Activated CD8-positive, alpha-beta T cell treated with anti-CD3 and anti-CD28 coated beads, Interleukin-2, amount 10 ng/mL, durations not matched to agents 7 days and 5 days (primary cell): ENCODE measurements at regions of chr15 and their contacts with region 1.

Region 1: DNA sequence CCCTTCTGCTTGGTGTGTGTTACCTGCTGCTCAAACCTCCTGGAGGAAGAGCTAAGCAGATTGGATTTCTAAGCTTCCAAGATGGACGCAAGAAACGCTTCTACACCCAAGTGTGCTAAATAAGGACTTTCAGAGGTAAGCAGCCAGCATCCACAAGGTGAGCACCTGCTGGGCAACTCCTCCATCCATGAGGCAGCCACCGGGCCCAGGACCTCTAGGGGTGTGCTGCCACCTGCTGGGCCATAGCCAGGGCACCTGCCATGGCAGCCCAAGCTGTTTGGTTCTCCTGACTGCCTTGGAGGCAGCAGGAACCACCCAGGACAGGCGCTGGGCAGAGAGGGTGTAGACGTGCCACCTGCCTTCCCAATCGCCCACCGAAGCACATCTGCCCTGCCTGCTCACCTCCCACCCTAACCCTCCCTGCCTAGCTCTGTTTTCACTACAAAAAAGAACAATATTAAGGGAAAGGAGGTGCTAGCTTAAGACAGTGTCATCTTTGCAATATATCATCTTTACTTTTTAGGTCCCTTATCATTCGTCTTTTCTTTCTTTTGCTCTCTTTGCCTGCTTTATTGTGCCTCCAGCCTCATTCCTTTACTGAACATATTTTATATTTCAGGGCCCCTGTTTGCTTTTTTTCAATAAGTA is 12.9 kb downstream of the C15orf62 start:
- DNase-seq: peak; percentile 85
- ATAC-seq: peak; percentile 98
- H3K4me3 Mint-ChIP-seq: no peak overlapping the region
- H3K27ac Mint-ChIP-seq: no peak overlapping the region
- H3K4me1 Mint-ChIP-seq: peaks cover 24% of the 10 kb centered on the region
- H3K27me3 Mint-ChIP-seq: no peaks in the 10 kb centered on the region

Region 2: DNA sequence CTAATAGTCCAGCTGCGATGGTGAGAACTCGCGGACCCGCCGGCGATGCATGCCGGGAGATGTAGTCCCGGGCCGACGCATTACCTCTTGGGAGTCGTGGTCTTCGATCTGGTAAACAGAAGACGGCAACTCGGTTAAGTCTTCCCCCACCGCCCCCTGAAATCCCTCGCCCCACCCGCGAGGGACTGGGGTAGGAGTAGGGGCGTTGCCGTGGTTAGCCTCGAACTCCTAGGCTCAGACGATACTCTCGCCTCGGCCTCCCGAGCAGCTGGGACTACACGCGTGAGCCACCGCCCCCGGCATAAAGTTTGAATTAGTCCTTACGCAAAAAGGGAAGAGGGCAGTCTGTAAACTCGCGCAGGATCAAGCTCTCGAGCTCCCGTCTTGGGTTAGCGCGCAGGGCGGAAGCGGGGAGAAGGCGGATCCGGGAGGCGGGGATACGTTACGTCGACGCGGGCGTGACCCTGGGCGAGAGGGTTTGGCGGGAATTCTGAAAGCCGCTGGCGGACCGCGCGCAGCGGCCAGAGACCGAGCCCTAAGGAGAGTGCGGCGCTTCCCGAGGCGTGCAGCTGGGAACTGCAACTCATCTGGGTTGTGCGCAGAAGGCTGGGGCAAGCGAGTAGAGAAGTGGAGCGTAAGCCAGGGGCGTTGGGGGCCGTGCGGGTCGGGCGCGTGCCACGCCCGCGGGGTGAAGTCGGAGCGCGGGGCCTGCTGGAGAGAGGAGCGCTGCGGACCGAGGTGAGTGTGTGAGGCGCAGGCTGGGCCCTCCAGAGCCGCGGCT is 87.8 kb before region 1 on chr15 and contains the start of gene RAD51:
- CTCF ChIA-PET with region 1: interaction called, 20 read pairs
- POLR2A ChIA-PET with region 1: interaction called, 8 read pairs
- DNase-seq: peak; percentile 96
- ATAC-seq: peak; percentile 94
- H3K4me3 Mint-ChIP-seq: peak within 1 kb of the TSS; percentile 100
- H3K27ac Mint-ChIP-seq: peak within 1 kb of the TSS; percentile 100
- H3K4me1 Mint-ChIP-seq: peaks cover 42% of the 10 kb centered on the region
- H3K27me3 Mint-ChIP-seq: no peaks in the 10 kb centered on the region
- total RNA-seq, gene RAD51: 82.7 to 87.3 TPM

Region 3: DNA sequence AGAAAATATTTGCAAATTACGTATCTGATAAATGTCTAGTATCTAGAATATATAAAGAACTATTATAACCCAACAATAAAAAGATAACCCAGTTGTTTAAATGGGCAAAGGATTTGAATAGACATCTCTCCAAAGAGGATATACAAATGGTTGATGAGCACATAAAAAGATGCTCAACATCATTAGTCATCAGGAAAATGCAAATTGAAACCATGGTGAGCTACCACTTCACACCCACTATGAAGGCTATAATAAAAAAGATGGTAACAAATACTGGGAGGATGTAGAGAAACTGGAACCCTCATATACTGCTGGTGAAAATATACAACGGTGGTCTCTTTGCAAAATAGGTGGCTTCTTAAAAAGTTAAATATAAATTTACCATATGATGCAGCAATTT is 59.8 kb before region 1 on chr15:
- CTCF ChIA-PET with region 1: interaction called, 10 read pairs
- POLR2A ChIA-PET with region 1: no interaction called
- DNase-seq: no peak
- ATAC-seq: no peak
- H3K4me3 Mint-ChIP-seq: no peak overlapping the region
- H3K27ac Mint-ChIP-seq: no peak overlapping the region
- H3K4me1 Mint-ChIP-seq: peaks cover 10% of the 10 kb centered on the region
- H3K27me3 Mint-ChIP-seq: no peaks in the 10 kb centered on the region

Region 4: GRCh38 chr15:40763801-40764732 is 18.6 kb before region 1 on chr15 and contains the start of gene GCHFR:
- CTCF ChIA-PET with region 1: interaction called, 18 read pairs
- POLR2A ChIA-PET with region 1: interaction called, 8 read pairs
- DNase-seq: peak; percentile 74
- ATAC-seq: peak; percentile 58
- H3K4me3 Mint-ChIP-seq: peak within 1 kb of the TSS; percentile 86
- H3K27ac Mint-ChIP-seq: peak within 1 kb of the TSS; percentile 91
- H3K4me1 Mint-ChIP-seq: peaks cover 45% of the 10 kb centered on the region
- H3K27me3 Mint-ChIP-seq: peaks cover 4% of the 10 kb centered on the region
- total RNA-seq, gene GCHFR: 50.6 to 50.8 TPM

Region 5: GRCh38 chr15:40793216-40793989 is 10.7 kb after region 1 on chr15:
- CTCF ChIA-PET with region 1: interaction called, 16 read pairs
- POLR2A ChIA-PET with region 1: no interaction called
- DNase-seq: no peak
- ATAC-seq: no peak
- H3K4me3 Mint-ChIP-seq: no peak overlapping the region
- H3K27ac Mint-ChIP-seq: no peak overlapping the region
- H3K4me1 Mint-ChIP-seq: peaks cover 6% of the 10 kb centered on the region
- H3K27me3 Mint-ChIP-seq: no peaks in the 10 kb centered on the region

Region 6: DNA sequence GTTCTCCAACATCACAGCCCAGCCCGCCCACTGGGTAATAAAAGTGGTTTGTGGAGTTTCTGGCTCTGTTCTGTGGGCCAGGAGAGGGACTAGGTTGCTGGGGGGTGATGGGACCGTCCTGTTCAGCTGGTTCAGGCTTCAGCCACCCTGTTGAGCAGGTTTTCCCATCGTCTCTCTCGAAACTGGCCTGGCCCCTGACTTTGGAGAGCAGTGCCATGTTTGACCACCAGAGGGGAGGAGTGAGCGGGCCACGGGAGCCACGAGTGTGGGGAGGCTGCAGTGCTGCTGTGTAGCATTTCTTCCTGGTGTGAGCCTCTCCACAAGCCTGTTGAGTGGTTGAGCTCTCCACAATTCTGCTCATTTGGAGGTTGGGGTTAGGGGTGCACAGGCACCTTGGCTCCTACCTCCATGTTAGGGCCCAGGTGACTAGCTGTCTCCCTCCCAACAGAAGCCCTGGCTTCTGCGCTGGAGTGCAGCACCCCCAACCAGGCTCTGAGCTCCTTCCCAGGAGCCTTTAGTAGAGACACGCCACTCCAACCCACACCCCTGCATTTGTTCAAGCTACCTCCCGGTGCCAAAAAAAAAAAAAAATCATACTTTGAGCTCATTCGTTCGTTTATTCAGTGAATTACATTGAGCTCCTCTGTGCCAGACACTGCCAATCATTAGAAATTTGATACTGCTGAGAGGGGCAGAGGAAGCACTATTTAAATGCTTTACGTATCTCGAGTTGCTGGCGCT is 75.1 kb after region 1 on chr15:
- CTCF ChIA-PET with region 1: interaction called, 26 read pairs
- POLR2A ChIA-PET with region 1: interaction called, 3 read pairs
- DNase-seq: peak; percentile 86
- ATAC-seq: peak; percentile 91
- H3K4me3 Mint-ChIP-seq: no peak overlapping the region
- H3K27ac Mint-ChIP-seq: no peak overlapping the region
- H3K4me1 Mint-ChIP-seq: peaks cover 19% of the 10 kb centered on the region
- H3K27me3 Mint-ChIP-seq: peaks cover 3% of the 10 kb centered on the region